Right ventricle myocardium inferior (tissue), 1 donor: ENCODE measurements at regions of chr18 and their contacts with region 1.

Region 1: DNA sequence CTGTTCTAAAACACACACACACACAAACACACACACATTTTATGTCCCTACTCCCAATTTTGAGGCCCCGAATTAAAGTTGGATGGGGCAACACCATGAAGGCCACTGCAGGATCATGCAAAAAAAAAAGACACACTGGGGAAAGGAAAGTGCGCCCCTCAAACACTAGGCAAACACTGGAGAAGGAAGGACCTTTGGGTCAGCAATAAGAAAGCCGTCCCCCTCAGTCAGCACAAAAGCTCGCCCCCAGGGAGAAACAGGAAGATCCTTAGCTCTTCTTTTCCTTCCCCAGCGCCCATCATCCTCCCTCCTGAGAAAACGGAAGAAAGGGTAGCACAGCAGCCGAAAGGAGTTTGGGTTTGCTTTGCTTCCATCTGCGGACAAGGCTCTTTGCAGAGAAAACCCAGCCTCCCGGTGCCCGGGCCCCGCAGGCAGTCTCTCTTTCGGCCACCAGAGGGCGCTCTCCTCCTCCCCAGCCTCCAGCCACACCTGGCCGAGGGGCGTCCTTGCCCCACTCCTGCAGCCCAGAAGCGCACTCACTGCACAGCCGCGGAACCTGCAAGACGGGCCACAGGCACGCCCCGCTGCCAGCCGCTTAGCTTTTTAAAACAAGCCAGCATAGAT is 248.5 kb downstream of the CDH20 start:
- DNase-seq: peak; percentile 85
- ATAC-seq: peak; percentile 86

Region 2: DNA sequence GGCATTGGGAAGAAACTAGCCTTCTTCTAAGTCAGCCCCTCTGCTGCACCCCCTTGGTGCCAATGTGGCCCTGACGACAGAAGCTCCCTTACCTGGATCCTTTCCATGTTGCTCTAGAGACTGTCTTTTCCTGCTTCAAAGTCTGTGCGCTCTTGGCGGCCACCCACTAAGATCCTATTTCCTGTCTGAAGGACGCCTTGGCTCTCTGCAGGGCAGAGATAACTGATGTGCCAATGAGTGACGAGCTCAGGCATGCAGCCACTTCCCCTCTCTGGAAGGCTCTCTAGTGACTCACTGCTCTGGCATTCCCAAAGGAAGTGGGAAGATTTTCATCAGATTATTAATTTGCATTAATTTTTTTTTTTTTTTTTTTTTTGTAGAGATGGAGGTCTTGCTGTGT is 25.1 kb after region 1 on chr18:
- intact Hi-C with region 1: loop called (anchors 2 kb)
- DNase-seq: peak; percentile 72
- ATAC-seq: peak; percentile 86

Region 3: DNA sequence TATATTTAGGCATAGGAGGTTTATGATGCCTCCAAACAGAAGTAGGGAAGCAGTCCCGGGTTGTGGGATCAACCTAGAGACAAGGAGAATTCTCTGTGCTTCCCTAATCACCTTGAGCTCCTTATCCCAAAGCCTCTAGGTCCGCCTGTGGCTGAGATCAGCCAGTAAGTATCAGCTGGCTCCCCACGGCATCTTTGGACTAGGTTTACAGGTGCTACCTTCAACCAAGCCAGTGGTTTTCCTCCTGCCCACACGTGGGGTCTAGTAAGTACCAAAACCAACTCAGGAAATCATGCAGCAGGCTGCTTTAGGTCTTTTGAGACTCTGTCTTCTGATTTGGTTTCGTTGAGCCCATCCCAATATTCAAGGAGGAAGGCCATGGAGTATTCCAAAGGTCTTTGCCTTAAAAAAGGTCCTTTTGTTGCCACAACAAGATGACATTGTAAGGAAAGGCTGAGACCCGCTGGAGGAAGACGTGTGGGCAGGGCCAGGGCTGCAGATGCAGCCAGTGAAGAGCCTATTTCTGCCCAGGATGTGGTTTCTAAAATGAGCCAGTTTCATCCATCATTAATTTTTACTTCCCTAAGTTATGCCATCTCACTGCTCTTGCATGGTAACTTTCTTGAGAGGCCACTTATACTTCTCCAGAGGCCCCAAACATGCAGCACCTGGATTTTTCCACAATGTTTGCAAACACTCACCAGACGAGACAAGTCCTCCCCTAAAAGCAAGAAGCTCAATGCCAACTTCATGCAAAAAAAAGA is 62.4 kb after region 1 on chr18:
- intact Hi-C with region 1: no loop called
- DNase-seq: no peak
- ATAC-seq: no peak

Region 4: DNA sequence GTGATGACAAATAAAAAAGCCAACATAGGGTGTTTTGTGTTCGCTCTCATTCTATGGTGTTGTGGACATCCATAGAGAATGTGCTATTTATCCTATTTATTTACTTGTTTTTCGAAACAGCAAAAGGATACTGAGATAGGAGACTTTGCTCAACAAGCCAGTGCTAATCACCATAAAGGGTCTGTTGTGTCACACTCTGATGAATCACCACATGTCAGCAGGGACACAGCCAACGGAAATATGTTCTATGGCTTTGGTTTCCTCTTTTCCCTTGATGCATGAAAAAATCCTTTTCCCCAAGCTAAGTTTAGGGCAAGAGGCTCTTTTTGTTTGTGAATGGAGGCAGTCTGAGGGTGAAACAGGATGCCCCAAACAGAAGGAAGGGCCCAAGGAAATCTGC is 156.8 kb after region 1 on chr18:
- intact Hi-C with region 1: loop called (anchors 10 kb)
- DNase-seq: no peak
- ATAC-seq: peak; percentile 47

Region 5: GRCh38 chr18:61785588-61785987 is 203.9 kb after region 1 on chr18:
- intact Hi-C with region 1: no loop called
- DNase-seq: no peak
- ATAC-seq: no peak

Region 6: GRCh38 chr18:61854578-61855448 is 273.1 kb after region 1 on chr18:
- intact Hi-C with region 1: no loop called
- DNase-seq: no peak
- ATAC-seq: peak; percentile 38

Region 7: GRCh38 chr18:61893971-61894750 is 312.5 kb after region 1 on chr18:
- intact Hi-C with region 1: loop called (anchors 2 kb)
- DNase-seq: peak; percentile 89
- ATAC-seq: peak; percentile 96